ENCODE measurements at regions of chr16 and their contacts with region 1.

Region 1: DNA sequence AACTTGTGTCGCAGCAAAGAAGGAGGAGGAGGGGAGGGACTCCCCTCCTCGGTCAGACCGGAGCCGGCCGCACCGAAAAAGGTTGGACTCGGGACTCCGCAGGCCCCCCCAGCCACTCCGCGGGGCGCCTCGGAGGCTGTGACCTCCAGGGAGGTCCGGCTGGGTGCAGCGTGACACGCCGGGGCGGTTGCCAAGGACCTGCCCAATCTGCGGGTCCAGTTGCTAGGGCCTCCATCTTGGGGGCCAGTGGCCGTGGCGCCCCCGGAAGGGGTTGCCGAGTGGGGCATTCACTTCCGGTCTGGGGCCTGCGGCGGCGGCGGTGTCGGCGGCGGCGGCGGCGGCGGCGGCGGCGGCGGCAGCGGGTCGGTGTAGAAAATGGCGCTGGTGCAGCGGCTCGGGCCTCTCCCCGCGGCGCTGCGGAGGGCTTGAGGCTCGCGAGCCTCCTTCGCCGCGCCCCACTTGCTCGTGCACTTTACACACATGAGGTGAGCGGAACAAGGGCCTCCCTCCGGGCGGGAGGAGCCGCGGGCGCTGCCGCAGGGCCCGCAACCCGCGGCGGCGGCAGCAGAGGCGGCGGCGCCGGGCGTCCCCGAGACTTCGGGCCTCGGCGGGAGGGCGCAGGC is at the start of gene TNRC6A:
- DNase-seq: peak; percentile 74 to 86 (median 79)
- H3K4me3 ChIP-seq: peak within 1 kb of the TSS; percentile 73 to 79
- H3K4me3 Mint-ChIP-seq: peak within 1 kb of the TSS; percentile 94 to 99 (median 98)
- H3K27ac ChIP-seq: peak within 1 kb of the TSS; percentile 89
- H3K27ac Mint-ChIP-seq: peak within 1 kb of the TSS; percentile 96 to 99 (median 98)
- H3K4me1 ChIP-seq: peaks cover 44% of the 10 kb centered on the region
- H3K4me1 Mint-ChIP-seq: peaks cover 31 to 51% (median 42%) of the 10 kb centered on the region in 4 donors
- H3K27me3 ChIP-seq: no peaks in the 10 kb centered on the region
- H3K27me3 Mint-ChIP-seq: peaks cover 0 to 3% of the 10 kb centered on the region in 2 donors
- total RNA-seq, gene TNRC6A: 99.3 to 103 TPM

Region 2: GRCh38 chr16:24769806-24770205 is 40.3 kb after region 1 on chr16:
- CTCF ChIA-PET with region 1: no interaction called
- POLR2A ChIA-PET with region 1: no interaction called
- intact Hi-C with region 1: loop called (anchors 5 kb)
- DNase-seq: no peak
- H3K4me3 ChIP-seq: no peak overlapping the region
- H3K4me3 Mint-ChIP-seq: no peak overlapping the region
- H3K27ac ChIP-seq: no peak overlapping the region
- H3K27ac Mint-ChIP-seq: peak overlapping the region in 5 of 7 donors; percentile 5 to 72 (median 10)
- H3K4me1 ChIP-seq: peaks cover 35% of the 10 kb centered on the region
- H3K4me1 Mint-ChIP-seq: peaks cover 33 to 42% (median 37%) of the 10 kb centered on the region in 4 donors
- H3K27me3 ChIP-seq: no peaks in the 10 kb centered on the region
- H3K27me3 Mint-ChIP-seq: no peaks in the 10 kb centered on the region